Mammary epithelial cell (primary cell): ENCODE measurements at regions of chr15 and their contacts with region 1.

Region 1: GRCh38 chr15:68484696-68485400 is 52.9 kb upstream of the ITGA11 start:
- DNase-seq: no peak
- H3K4me3 ChIP-seq: no peak overlapping the region
- H3K27ac ChIP-seq: no peak overlapping the region
- H3K4me1 ChIP-seq: no peaks in the 10 kb centered on the region
- H3K27me3 ChIP-seq: peaks cover 10% of the 10 kb centered on the region
- CTCF ChIP-seq: no peak

Region 2: DNA sequence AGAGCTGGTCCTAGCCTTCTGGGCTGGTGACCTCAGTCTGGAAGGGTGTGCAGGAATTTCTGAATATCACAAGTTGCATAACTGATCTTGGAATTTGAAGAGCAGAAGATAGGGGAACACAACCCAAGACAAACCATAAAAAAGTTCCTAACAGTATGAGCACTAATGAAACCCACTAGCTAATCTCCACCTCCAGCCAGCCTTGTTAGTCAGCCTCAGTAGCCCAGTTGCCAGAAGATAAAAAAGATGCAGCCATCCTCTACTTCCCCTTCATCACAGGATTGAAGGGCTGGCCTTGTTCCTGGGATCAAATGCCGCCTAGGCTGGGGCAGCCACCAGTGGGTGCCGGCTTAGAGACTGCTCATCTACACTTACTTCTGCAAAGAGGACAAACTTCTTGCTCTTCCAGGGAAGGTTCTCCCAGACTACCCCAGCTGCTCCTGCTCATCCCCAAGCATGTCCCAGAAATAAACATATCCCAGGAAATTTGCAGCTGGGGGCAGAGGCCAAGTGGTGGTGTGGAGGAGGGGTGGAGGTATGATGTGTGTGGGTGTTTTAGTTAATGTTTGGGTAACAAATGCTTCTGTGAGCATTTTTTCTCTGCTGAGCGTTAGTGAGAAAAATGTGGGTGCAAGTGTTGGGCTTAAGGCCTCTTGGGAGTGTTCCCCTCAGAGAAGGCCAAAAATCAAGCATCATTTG is 43.7 kb before region 1 on chr15:
- CTCF ChIA-PET with region 1: no interaction called
- dilution Hi-C with region 1: no loop called
- in situ Hi-C with region 1: no loop called
- intact Hi-C with region 1: loop called (anchors 5 kb)
- DNase-seq: no peak
- H3K4me3 ChIP-seq: no peak overlapping the region
- H3K27ac ChIP-seq: no peak overlapping the region
- H3K4me1 ChIP-seq: no peaks in the 10 kb centered on the region
- H3K27me3 ChIP-seq: peaks cover 4% of the 10 kb centered on the region
- CTCF ChIP-seq: no peak

Region 3: GRCh38 chr15:68526269-68526668 is 41.4 kb after region 1 on chr15:
- CTCF ChIA-PET with region 1: no interaction called
- dilution Hi-C with region 1: loop called (anchors 5 kb)
- in situ Hi-C with region 1: no loop called
- intact Hi-C with region 1: no loop called
- DNase-seq: peak; percentile 63
- H3K4me3 ChIP-seq: no peak overlapping the region
- H3K27ac ChIP-seq: no peak overlapping the region
- H3K4me1 ChIP-seq: peaks cover 14% of the 10 kb centered on the region
- H3K27me3 ChIP-seq: no peaks in the 10 kb centered on the region
- CTCF ChIP-seq: no peak